HEK293 (cell line): ENCODE measurements at regions of chr6 and their contacts with region 1.

Region 1: DNA sequence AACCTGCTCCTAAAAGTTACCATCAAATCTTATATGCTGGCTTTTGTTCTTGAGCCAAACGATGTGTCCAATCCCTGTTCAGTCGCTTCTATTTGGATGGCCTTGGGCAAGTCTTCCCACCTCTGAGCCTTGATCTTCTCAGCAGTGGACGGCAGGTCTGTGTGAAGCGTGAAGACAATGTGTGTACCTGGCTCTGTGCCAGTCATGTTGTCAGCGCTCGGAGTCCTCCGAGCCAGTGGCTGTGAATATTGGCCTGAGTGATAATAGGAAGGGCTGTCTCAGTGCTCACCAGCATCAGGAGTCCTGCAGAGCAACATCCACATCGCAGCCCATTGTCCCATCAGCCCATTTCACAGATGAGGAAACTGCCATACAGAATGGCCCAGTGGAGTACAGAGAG is 219.0 kb downstream of the CDC5L start:
- H3K4me3 ChIP-seq: no peak overlapping the region
- H3K27ac ChIP-seq: no peak overlapping the region
- H3K4me1 ChIP-seq: no peaks in the 10 kb centered on the region
- CTCF ChIP-seq: no peak

Region 2: DNA sequence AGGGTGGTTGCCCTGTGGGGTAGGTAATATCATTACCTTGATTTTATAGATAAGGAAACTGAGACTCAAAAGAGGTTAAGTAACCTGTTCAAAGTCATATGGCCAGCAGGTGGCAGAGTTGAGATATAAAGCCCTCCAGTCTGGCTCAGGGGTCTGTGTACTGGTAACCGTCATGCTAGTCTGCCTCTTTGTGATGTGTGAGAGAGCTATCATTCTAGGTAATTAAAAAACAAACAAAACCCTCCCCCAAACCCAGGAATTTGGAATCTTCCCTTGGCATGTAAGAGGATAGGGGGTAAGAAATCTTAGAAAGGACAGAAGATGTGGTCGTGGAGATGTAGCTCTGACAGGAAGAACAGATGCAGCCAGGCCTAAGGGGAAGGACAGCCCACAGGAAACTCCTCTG is 13.0 kb before region 1 on chr6:
- CTCF ChIA-PET with region 1: interaction called, 12 read pairs
- POLR2A ChIA-PET with region 1: no interaction called
- H3K4me3 ChIP-seq: no peak overlapping the region
- H3K27ac ChIP-seq: no peak overlapping the region
- H3K4me1 ChIP-seq: no peaks in the 10 kb centered on the region
- CTCF ChIP-seq: peak; percentile 41; the same call in 1 of the 2 replicates